ENCODE measurements at regions of chr2 and their contacts with region 1.

Region 1: GRCh38 chr2:109722026-109722425 is 72.1 kb upstream of the RGPD5 start:
- DNase-seq: peak in 2 of 10 donors; percentile 4 to 35
- H3K4me3 ChIP-seq: no peak overlapping the region
- H3K27ac ChIP-seq: no peak overlapping the region
- H3K27me3 ChIP-seq: peaks cover 0 to 7% (median 0%) of the 10 kb centered on the region in 45 donors
- CTCF ChIP-seq: no peak

Region 2: GRCh38 chr2:109545828-109546713 is 176.0 kb before region 1 on chr2:
- intact Hi-C with region 1: loop called in 1 of 2 experiments (anchors 10 kb)
- DNase-seq: peak in 9 of 10 donors; percentile 55 to 82 (median 67)
- H3K4me3 ChIP-seq: no peak overlapping the region
- H3K27ac ChIP-seq: no peak overlapping the region
- H3K27me3 ChIP-seq: no peaks in the 10 kb centered on the region
- CTCF ChIP-seq: peak; percentile 62 to 97 (median 90)

Measured in dorsolateral prefrontal cortex (tissue), 120 donors.